Posterior vena cava (tissue), 2 donors: ENCODE measurements at regions of chr3 and their contacts with region 1.

Region 1: DNA sequence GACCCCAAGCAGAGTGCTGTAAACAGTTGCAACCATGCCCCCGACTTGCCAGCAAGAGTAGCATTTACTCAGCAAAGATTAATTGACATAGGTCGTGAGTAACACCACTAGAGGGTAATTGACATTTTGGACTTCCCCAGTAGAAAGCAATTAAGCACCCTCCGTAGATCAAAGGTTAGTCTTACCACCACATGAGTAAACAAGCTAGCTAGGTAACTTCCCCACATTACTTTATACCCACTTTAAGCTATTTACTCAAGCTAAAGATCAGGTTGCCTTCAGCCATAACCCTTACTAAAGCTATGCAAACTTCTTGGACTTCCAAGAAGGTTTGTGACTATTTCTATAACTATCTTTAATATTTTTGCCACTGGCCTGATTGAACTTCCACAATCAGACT is 1072.7 kb downstream of the OTOL1 start:
- DNase-seq: no peak

Region 2: DNA sequence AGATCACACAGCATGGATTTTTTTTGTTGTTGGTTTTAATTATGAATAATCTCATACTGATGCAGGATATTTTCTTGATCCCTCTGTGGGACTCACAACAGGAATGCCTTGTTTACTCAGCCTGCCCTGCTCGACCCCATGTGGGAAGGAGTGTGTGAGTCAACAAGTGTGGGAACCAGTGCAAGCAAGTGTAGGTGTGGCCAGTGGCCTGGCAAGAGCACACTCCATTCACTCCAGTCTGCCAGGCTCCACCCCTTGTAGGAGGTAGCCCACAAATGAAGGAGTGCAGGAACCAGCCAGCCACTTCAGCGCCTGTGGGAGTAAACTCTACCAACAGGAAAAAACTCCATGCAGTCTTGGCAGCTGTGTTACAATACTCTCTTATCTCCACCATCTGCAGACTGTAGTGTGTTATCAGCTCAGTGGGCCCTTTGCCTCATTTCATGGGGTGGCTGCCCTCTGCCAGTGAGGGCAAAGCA is 679.1 kb before region 1 on chr3:
- intact Hi-C with region 1: no loop called
- DNase-seq: no peak

Region 3: DNA sequence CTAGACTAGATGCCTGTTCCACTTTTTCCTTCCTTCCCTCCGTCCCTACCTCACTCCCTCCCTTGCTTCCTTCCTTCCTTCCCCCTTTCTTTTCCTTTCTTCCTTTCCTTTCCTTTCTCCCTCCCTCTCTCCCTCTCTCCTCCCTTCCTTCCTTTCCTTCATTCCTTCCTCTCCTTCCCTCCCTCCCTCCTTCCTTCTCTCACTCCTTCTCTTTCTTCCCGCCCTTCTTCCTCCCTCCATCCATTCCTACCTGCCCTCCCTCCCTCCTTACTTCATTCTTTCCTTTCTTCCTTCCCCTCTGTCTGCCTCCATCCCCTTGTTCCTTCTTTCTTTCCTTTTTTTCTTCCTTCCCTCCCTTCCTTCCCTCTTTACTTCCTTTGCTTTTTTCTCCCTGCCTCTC is 27.4 kb before region 1 on chr3:
- intact Hi-C with region 1: loop called in 1 of 2 experiments (anchors 1 kb)
- DNase-seq: no peak